ENCODE measurements at regions of chr6 and their contacts with region 1.

Region 1: DNA sequence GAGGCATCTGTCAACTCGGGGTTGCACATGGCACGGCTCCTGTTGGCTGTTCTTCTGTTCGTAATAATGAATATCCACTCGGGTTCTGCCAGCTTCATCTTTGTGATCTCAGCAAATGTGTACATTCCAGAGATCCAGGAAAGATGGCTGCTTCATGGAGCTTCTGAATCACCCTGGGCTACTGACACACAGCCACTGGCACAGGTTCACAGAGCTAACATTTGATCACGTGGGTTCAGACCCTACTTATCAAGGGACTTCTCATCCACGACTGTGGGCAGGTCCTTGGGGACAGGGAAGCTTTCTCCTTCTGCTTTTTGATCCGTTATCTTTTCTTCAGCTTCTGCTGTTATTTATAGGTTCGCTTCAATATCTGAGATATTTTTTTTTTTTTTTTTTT is 18.1 kb downstream of the PPP1R3G start:
- DNase-seq: no peak
- ATAC-seq: no peak
- H3K4me3 ChIP-seq: no peak overlapping the region
- H3K27ac ChIP-seq: no peak overlapping the region
- H3K4me1 ChIP-seq: no peaks in the 10 kb centered on the region
- H3K27me3 ChIP-seq: no peaks in the 10 kb centered on the region
- CTCF ChIP-seq: no peak

Region 2: GRCh38 chr6:4856785-4857184 is 246.5 kb before region 1 on chr6:
- CTCF ChIA-PET with region 1: no interaction called
- POLR2A ChIA-PET with region 1: no interaction called
- in situ Hi-C with region 1: no loop called
- intact Hi-C with region 1: no loop called
- DNase-seq: no peak
- ATAC-seq: 0 out of 2 replicates have a peak, but pooled peaks have one; percentile 68
- H3K4me3 ChIP-seq: no peak overlapping the region
- H3K27ac ChIP-seq: no peak overlapping the region
- H3K4me1 ChIP-seq: no peaks in the 10 kb centered on the region
- H3K27me3 ChIP-seq: no peaks in the 10 kb centered on the region
- CTCF ChIP-seq: peak; percentile 41

Region 3: GRCh38 chr6:5116243-5116991 is 13.2 kb after region 1 on chr6:
- CTCF ChIA-PET with region 1: no interaction called
- POLR2A ChIA-PET with region 1: interaction called, 12 read pairs
- in situ Hi-C with region 1: no loop called
- intact Hi-C with region 1: no loop called
- DNase-seq: no peak
- ATAC-seq: no peak
- H3K4me3 ChIP-seq: no peak overlapping the region
- H3K27ac ChIP-seq: no peak overlapping the region
- H3K4me1 ChIP-seq: no peaks in the 10 kb centered on the region
- H3K27me3 ChIP-seq: no peaks in the 10 kb centered on the region
- CTCF ChIP-seq: no peak